IMR-90 (cell line): ENCODE measurements at regions of chr10 and their contacts with region 1.

Region 1: GRCh38 chr10:77710759-77711682 is 73.4 kb upstream of the KCNMA1 start:
- DNase-seq: peak; percentile 44
- ATAC-seq: peak; percentile 100
- H3K4me3 ChIP-seq: peak overlapping the region; percentile 33
- H3K27ac ChIP-seq: no peak overlapping the region; the same call in 1 of the 2 replicates
- H3K4me1 ChIP-seq: no peaks in the 10 kb centered on the region
- H3K27me3 ChIP-seq: peaks cover 6% of the 10 kb centered on the region; the same call in 1 of the 2 replicates
- CTCF ChIP-seq: peak; percentile 95
- POLR2A ChIP-seq: no peak
- RAD21 ChIP-seq: peak; percentile 87

Region 2: DNA sequence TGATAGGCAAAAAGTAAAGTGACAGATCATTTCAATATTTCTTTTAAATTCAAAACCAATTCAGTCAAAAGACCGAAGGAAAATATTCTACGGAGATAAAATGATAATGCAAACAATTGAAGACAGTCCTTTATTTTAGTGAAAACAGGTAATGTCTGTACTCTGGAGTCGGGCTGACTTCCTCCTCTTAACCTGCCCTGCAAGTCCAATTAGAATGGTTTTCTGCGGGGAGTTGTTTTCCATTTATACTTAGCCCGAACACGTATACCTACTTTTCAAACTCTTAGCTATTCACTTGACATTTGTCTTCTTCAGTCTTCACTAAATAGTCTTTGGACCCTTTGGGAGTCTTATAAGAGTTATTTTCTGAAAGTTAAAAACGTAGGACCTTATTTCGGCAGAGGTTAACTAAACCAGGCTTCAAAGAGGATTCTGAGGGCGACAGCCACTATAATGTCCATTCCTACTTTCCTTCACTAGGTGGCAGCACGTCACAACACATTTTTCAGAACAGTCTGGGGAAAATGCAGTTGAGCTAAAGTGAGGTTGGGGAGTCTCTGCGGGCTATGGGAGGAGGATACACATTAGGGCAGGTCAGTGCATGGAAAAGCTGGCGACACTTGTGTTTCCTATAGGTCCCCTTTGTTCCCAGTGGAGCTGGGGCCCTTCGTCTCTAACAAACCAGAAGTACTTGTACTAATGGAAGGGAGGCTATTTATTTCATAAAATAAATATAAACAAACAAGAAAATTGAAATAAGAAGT is 545.4 kb before region 1 on chr10:
- CTCF ChIA-PET with region 1: interaction called, 3 read pairs
- POLR2A ChIA-PET with region 1: no interaction called
- dilution Hi-C with region 1: no loop called
- in situ Hi-C with region 1: no loop called
- intact Hi-C with region 1: loop called (anchors 2 kb)
- DNase-seq: peak; percentile 71
- ATAC-seq: peak; percentile 55
- H3K4me3 ChIP-seq: no peak overlapping the region
- H3K27ac ChIP-seq: no peak overlapping the region
- H3K4me1 ChIP-seq: peaks cover 15% of the 10 kb centered on the region
- H3K27me3 ChIP-seq: no peaks in the 10 kb centered on the region
- CTCF ChIP-seq: peak; percentile 82
- POLR2A ChIP-seq: no peak
- RAD21 ChIP-seq: peak; percentile 86

Region 3: GRCh38 chr10:77173615-77174461 is 537.2 kb before region 1 on chr10:
- CTCF ChIA-PET with region 1: interaction called, 3 read pairs
- POLR2A ChIA-PET with region 1: no interaction called
- dilution Hi-C with region 1: no loop called
- in situ Hi-C with region 1: loop called (anchors 5 kb)
- intact Hi-C with region 1: loop called (anchors 2 kb)
- DNase-seq: peak; percentile 79
- ATAC-seq: peak; percentile 93
- H3K4me3 ChIP-seq: no peak overlapping the region
- H3K27ac ChIP-seq: no peak overlapping the region
- H3K4me1 ChIP-seq: no peaks in the 10 kb centered on the region; the same call in 1 of the 2 replicates
- H3K27me3 ChIP-seq: no peaks in the 10 kb centered on the region
- CTCF ChIP-seq: peak; percentile 96
- POLR2A ChIP-seq: 0 out of 2 replicates have a peak, but pooled peaks have one; percentile 36
- RAD21 ChIP-seq: peak; percentile 96

Region 4: GRCh38 chr10:77179015-77179695 is 531.9 kb before region 1 on chr10:
- CTCF ChIA-PET with region 1: no interaction called
- POLR2A ChIA-PET with region 1: no interaction called
- dilution Hi-C with region 1: no loop called
- in situ Hi-C with region 1: loop called (anchors 5 kb)
- intact Hi-C with region 1: loop called (anchors 2 kb)
- DNase-seq: peak; percentile 94
- ATAC-seq: peak; percentile 88
- H3K4me3 ChIP-seq: no peak overlapping the region
- H3K27ac ChIP-seq: no peak overlapping the region
- H3K4me1 ChIP-seq: peaks cover 8% of the 10 kb centered on the region
- H3K27me3 ChIP-seq: no peaks in the 10 kb centered on the region
- CTCF ChIP-seq: no peak
- POLR2A ChIP-seq: no peak
- RAD21 ChIP-seq: peak; percentile 8; the same call in 1 of the 2 replicates

Region 5: DNA sequence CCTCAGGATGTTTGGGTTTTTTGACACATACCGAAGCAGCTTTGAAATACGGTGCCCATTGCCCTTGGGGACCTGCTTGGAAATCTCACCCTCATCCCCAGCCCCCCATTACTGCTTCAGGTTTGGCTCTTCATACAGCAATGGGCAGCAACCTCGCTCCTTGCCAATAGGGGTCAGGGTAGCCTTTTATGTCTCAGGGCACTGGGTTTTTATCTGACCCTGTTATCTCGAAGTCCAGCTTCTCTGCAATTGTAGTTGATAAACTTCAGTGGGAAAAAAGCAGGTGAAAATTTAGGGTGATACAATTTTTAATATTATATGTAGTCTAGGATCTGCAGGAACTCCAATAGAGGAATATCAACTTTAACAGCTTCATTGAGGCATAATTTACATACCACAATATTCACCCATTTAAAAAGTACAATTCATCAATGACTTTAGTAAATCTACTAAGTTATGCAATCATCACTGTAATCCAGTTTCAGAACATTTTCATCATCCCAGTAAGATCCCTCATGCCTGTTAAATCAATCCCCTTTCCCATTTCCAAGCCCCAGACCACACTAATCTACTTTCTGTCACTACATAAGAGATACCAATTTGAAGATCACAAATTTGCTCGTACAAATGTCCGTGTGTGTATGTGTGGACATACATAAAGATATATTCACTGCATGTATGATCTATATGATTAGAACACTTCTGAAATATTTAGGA is 459.6 kb before region 1 on chr10:
- CTCF ChIA-PET with region 1: interaction called, 3 read pairs
- POLR2A ChIA-PET with region 1: no interaction called
- dilution Hi-C with region 1: no loop called
- in situ Hi-C with region 1: no loop called
- intact Hi-C with region 1: loop called (anchors 5 kb)
- DNase-seq: peak; percentile 62
- ATAC-seq: peak; percentile 76
- H3K4me3 ChIP-seq: no peak overlapping the region
- H3K27ac ChIP-seq: no peak overlapping the region
- H3K4me1 ChIP-seq: peaks cover 10% of the 10 kb centered on the region
- H3K27me3 ChIP-seq: no peaks in the 10 kb centered on the region
- CTCF ChIP-seq: peak; percentile 78
- POLR2A ChIP-seq: no peak
- RAD21 ChIP-seq: peak; percentile 86

Region 6: GRCh38 chr10:77531441-77532001 is 179.5 kb before region 1 on chr10:
- CTCF ChIA-PET with region 1: no interaction called
- POLR2A ChIA-PET with region 1: no interaction called
- dilution Hi-C with region 1: no loop called
- in situ Hi-C with region 1: no loop called
- intact Hi-C with region 1: loop called (anchors 10 kb)
- DNase-seq: peak; percentile 92
- ATAC-seq: peak; percentile 80
- H3K4me3 ChIP-seq: no peak overlapping the region
- H3K27ac ChIP-seq: peak overlapping the region; percentile 65
- H3K4me1 ChIP-seq: peaks cover 35% of the 10 kb centered on the region
- H3K27me3 ChIP-seq: no peaks in the 10 kb centered on the region
- CTCF ChIP-seq: no peak
- POLR2A ChIP-seq: 0 out of 2 replicates have a peak, but pooled peaks have one; percentile 33
- RAD21 ChIP-seq: peak; percentile 29